ENCODE measurements at regions of chrX and their contacts with region 1.

Region 1: GRCh38 chrX:154748712-154749343 is 2.0 kb downstream of the GAB3 start:
- DNase-seq: peak in 1 of 2 experiments; percentile 47
- H3K4me3 ChIP-seq: no peak overlapping the region
- H3K27ac ChIP-seq: no peak overlapping the region
- H3K4me1 ChIP-seq: peaks cover 3% of the 10 kb centered on the region; the same call in 1 of the 2 replicates
- H3K27me3 ChIP-seq: peaks cover 26% of the 10 kb centered on the region
- CTCF ChIP-seq: peak; percentile 79

Region 2: DNA sequence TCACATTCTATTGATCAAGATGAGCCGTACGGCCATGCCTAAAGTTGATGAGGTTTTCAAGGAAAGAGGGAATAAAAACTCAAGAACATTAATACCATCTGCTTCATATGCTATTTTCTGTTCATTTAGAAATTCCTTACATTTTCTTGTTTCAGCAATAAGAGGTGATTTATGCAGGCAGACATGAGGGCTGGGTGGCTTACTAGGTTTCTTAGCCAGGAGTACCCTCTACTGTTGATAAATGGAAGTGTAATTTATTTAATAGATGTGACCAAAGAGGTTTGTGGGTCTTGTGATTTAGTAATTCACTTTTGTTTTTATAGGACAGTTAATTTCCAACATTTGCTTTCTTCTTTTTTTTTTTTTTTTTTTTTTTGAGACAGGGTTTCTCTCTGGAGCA is 92.0 kb after region 1 on chrX:
- CTCF ChIA-PET with region 1: no interaction called
- POLR2A ChIA-PET with region 1: interaction called, 9 read pairs
- intact Hi-C with region 1: loop called (anchors 2 kb)
- DNase-seq: peak; percentile 0 to 42
- H3K4me3 ChIP-seq: no peak overlapping the region
- H3K27ac ChIP-seq: no peak overlapping the region
- H3K4me1 ChIP-seq: no peaks in the 10 kb centered on the region
- H3K27me3 ChIP-seq: no peaks in the 10 kb centered on the region
- CTCF ChIP-seq: peak; percentile 78

Region 3: DNA sequence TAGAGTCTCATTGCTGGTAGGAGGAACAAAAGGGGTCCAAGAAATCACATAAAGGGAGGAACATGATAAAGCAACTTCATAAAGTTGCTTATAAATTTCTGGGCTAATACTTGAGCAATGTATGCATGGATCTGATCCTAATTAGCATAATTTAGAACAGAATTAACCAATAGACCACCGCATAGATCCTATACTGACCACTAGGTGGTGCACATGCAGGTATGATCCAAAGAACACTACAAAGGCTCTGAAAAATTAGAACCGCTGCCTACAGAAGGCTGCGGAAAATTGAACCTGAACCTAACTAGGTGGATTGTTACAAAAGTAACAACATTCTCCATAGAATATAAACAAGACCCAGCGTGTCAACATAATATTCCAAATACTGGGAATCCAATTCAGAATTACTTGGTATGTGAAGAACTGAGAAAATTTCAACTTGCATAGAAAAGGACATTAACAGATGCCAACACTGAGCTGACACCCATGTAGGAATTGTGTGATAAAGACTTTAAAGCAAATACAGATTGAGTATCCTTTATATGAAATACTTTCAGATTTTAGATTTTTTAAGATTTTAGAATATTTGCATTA is 345.7 kb after region 1 on chrX:
- CTCF ChIA-PET with region 1: interaction called, 10 read pairs
- POLR2A ChIA-PET with region 1: no interaction called
- intact Hi-C with region 1: no loop called
- DNase-seq: peak in 1 of 2 experiments; percentile 7
- H3K4me3 ChIP-seq: no peak overlapping the region
- H3K27ac ChIP-seq: no peak overlapping the region
- H3K4me1 ChIP-seq: no peaks in the 10 kb centered on the region
- H3K27me3 ChIP-seq: no peaks in the 10 kb centered on the region
- CTCF ChIP-seq: peak; percentile 76